ENCODE measurements at regions of chr2 and their contacts with region 1.

Region 1: GRCh38 chr2:75710577-75711253 is at the start of gene GCFC2:
- DNase-seq: peak; percentile 78 to 98 (median 86)

Region 2: GRCh38 chr2:75592028-75592427 is 118.7 kb before region 1 on chr2:
- intact Hi-C with region 1: no loop called
- DNase-seq: no peak

Region 3: DNA sequence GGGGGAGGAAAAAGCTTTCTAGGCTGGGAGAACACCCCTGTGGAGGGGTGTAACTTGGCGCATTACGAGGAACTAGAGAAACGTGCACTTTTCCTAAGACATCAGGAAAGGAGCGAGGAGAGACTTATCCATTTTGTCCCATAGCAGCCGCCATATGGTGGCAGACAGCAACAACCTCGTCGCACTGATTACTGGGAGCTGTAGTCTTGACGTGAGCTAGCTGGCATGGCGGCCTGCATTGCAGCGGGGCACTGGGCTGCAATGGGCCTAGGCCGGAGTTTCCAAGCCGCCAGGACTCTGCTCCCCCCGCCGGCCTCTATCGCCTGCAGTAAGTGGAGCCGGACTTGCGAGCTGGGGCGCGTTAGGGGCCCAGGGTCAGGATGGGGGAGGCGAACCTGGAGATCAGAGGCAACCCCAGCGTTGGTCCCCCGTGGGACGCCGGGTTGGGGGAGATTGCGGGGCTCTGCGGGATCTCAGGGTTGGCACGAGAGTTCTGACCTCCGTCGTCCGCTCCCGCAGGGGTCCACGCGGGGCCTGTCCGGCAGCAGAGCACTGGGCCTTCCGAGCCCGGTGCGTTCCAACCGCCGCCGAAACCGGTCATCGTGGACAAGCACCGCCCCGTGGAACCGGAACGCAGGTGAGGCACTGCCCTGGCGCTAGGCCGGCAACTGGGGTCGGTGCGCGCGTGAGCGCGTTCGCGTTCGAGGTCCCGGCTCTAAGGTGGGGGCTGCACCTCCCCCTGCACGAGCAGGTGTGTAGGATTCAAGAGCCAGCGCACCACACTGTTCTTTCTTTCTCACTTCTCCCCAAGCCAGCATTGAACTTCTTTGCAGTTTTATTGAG is 63.9 kb before region 1 on chr2 and contains the start of gene MRPL19:
- intact Hi-C with region 1: loop called (anchors 2 kb)
- DNase-seq: peak; percentile 83 to 97 (median 88)

Measured in posterior cingulate gyrus (tissue), 11 donors.